Stomach (tissue), 19 donors: ENCODE measurements at regions of chr2 and their contacts with region 1.

Region 1: DNA sequence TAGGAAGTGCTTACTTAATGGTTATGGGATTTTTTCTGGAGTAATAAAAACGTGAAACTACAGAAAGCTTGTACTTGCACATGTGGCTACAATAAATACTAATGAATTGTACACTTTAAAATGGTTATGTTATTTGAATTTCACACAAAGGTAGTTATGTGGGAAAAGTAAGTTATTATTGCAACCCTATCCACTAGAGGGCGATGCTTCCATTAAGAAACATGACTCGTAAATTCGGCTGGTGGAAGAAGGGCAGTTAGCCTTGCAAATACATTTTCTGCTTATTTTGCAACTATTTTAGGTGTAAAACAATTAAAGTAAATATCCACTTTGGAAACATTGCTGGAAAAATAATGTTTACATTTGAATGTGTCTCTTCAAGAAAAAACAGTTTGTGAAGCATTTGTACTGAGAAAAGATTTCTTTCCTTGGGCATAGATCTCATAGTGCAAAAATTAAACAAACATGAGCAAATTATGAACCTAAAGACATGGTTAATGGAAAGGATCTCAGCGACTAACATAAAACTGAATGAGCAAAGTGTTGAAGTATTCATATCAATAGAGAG is 68.1 kb upstream of the CSRNP3 start:
- DNase-seq: peak in 1 of 2 donors; percentile 89
- H3K4me3 ChIP-seq: no peak overlapping the region
- H3K27ac ChIP-seq: no peak overlapping the region
- H3K4me1 ChIP-seq: peaks cover 0 to 6% (median 0%) of the 10 kb centered on the region in 4 donors
- H3K27me3 ChIP-seq: no peaks in the 10 kb centered on the region
- CTCF ChIP-seq: peak in 5 of 7 experiments; percentile 18 to 70 (median 56)
- EP300 ChIP-seq: no peak
- POLR2A ChIP-seq: no peak

Region 2: DNA sequence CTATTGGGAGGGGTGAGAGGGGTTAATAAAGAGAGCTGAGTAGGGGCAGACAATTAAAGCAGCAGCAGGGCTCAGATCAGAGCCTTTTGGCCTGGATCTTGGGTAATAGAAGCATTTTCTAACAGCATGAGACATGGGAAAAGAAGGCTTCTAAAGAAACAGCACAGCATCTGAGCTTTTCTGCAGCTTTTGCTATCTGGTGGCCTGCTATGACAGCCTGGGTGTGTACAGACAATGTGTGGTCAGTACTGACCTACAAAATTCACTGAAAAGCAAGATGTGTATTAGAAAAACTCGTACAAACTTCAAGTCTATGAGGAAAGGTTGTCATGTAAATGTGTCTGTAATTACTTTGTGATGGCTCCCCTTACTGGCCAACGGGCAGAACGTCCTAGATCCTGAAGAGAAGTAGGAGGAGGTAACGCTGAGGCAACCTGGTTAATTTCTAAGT is 297.1 kb after region 1 on chr2:
- intact Hi-C with region 1: loop called (anchors 10 kb)
- DNase-seq: peak; percentile 41 to 81
- H3K4me3 ChIP-seq: no peak overlapping the region
- H3K27ac ChIP-seq: no peak overlapping the region
- H3K4me1 ChIP-seq: no peaks in the 10 kb centered on the region
- H3K27me3 ChIP-seq: no peaks in the 10 kb centered on the region
- CTCF ChIP-seq: peak in 5 of 7 experiments; percentile 25 to 44 (median 28)
- EP300 ChIP-seq: no peak
- POLR2A ChIP-seq: no peak